ENCODE measurements at regions of chr11 and their contacts with region 1.

Region 1: GRCh38 chr11:29773656-29774264 is 243.1 kb downstream of the KCNA4 start:
- DNase-seq: no peak

Region 2: GRCh38 chr11:29534836-29535235 is 238.9 kb before region 1 on chr11:
- intact Hi-C with region 1: loop called (anchors 10 kb)
- DNase-seq: no peak

Region 3: GRCh38 chr11:30016588-30017363 is 243.0 kb after region 1 on chr11 and contains the start of gene KCNA4:
- intact Hi-C with region 1: loop called (anchors 10 kb)
- DNase-seq: peak; percentile 72
- total RNA-seq, gene KCNA4: 15.6 TPM

Measured in cardiac septum (tissue), 1 donor.